ENCODE measurements at regions of chr14 and their contacts with region 1.

Region 1: DNA sequence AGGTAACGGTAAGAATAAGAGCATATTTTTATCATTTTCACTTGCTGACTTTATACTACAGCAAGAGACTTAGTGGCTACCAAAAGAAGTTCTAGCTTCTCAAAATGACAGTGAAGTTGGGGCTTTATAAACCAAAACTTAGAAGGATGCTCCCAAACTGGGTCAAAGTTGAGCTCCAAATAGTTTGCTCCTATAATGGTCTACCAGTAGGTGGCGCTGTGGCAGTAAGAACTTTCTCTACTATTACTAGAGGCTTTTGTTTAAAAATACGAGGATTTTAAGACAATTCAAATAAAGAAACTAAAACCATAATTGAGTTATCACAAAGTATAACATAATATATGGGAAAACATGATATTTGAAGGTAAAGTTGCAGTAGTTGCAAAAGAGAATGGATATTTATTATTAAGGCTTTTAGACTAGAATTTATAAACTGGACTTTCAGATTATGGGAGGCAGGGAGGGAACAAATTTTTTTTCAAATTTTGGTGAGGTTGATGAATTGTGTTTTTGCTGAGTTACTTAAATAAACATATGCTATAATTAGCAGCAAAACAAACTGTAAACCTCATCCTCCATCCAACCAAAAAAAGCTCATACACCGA is 75.0 kb downstream of the TGFB3 start:
- DNase-seq: peak; percentile 83
- ATAC-seq: no peak
- H3K4me3 Mint-ChIP-seq: no peak overlapping the region
- H3K27ac Mint-ChIP-seq: no peak overlapping the region
- H3K4me1 Mint-ChIP-seq: no peaks in the 10 kb centered on the region
- H3K27me3 Mint-ChIP-seq: no peaks in the 10 kb centered on the region

Region 2: DNA sequence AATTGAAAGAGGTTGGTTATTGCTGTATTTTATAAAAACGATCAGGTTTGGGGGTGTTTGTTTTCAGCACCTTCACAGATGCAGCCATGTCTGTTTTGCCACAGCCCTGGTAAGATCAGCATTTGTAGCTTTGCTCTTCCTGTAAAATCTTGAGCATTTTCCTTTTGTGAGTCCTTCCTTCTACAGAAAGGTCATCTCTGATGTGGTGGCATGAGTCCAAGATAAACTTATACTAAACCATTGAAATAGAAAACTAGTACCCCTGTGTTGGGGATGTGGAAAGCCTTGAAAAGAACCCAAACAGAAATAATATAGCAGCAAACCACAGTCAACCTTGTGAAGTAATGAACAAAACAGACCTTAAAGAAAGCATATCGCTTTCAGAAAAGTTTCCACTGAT is 10.4 kb before region 1 on chr14:
- CTCF ChIA-PET with region 1: interaction called, 13 read pairs
- POLR2A ChIA-PET with region 1: no interaction called
- intact Hi-C with region 1: no loop called
- DNase-seq: no peak
- ATAC-seq: no peak
- H3K4me3 Mint-ChIP-seq: no peak overlapping the region
- H3K27ac Mint-ChIP-seq: no peak overlapping the region
- H3K4me1 Mint-ChIP-seq: no peaks in the 10 kb centered on the region
- H3K27me3 Mint-ChIP-seq: no peaks in the 10 kb centered on the region

Region 3: GRCh38 chr14:75982266-75983018 is 75.7 kb after region 1 on chr14:
- CTCF ChIA-PET with region 1: interaction called, 31 read pairs
- POLR2A ChIA-PET with region 1: interaction called, 5 read pairs
- intact Hi-C with region 1: loop called (anchors 1 kb)
- DNase-seq: peak; percentile 86
- ATAC-seq: peak; percentile 62
- H3K4me3 Mint-ChIP-seq: peak overlapping the region; percentile 67
- H3K27ac Mint-ChIP-seq: peak overlapping the region; percentile 78
- H3K4me1 Mint-ChIP-seq: peaks cover 42% of the 10 kb centered on the region
- H3K27me3 Mint-ChIP-seq: no peaks in the 10 kb centered on the region

Region 4: GRCh38 chr14:76352639-76353281 is 446.0 kb after region 1 on chr14:
- CTCF ChIA-PET with region 1: no interaction called
- POLR2A ChIA-PET with region 1: no interaction called
- intact Hi-C with region 1: loop called in 1 of 2 experiments (anchors 10 kb)
- DNase-seq: peak; percentile 78
- ATAC-seq: peak; percentile 92
- H3K4me3 Mint-ChIP-seq: no peak overlapping the region
- H3K27ac Mint-ChIP-seq: no peak overlapping the region
- H3K4me1 Mint-ChIP-seq: no peaks in the 10 kb centered on the region
- H3K27me3 Mint-ChIP-seq: peaks cover 14% of the 10 kb centered on the region

Region 5: GRCh38 chr14:76386915-76387782 is 480.4 kb after region 1 on chr14:
- CTCF ChIA-PET with region 1: no interaction called
- POLR2A ChIA-PET with region 1: no interaction called
- intact Hi-C with region 1: loop called in 1 of 2 experiments (anchors 1 kb)
- DNase-seq: peak; percentile 83
- ATAC-seq: peak; percentile 90
- H3K4me3 Mint-ChIP-seq: no peak overlapping the region
- H3K27ac Mint-ChIP-seq: no peak overlapping the region
- H3K4me1 Mint-ChIP-seq: no peaks in the 10 kb centered on the region
- H3K27me3 Mint-ChIP-seq: peaks cover 37% of the 10 kb centered on the region

Measured in activated CD4-positive, alpha-beta T cell treated with anti-CD3 and anti-CD28 coated beads for 36 hours (primary cell).